Breast epithelium (tissue), 4 donors: ENCODE measurements at regions of chr21 and their contacts with region 1.

Region 1: DNA sequence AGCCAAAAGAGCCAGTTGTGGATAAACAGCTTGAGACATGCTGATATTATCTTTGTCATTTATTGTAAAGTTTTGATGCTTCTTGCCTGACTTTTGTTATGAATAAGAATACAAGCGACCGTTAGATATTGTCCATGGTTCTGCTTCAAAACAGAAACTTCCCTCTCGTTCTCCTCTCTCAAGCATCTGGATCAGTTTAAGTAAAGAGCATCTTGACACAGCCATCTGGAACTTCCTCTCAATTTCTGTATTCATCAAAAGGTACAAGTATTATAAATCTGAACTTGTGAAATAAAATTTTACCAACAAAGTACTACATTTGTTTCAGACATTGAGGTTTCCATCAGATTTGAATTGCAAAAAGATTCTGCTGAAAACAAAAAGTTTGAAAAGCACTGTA is 36.4 kb upstream of the CLDN14 start:
- DNase-seq: no peak
- H3K4me3 ChIP-seq: no peak overlapping the region
- H3K27ac ChIP-seq: no peak overlapping the region
- H3K4me1 ChIP-seq: peaks cover 0 to 4% of the 10 kb centered on the region in 2 donors
- H3K27me3 ChIP-seq: no peaks in the 10 kb centered on the region
- CTCF ChIP-seq: no peak
- POLR2A ChIP-seq: no peak

Region 2: DNA sequence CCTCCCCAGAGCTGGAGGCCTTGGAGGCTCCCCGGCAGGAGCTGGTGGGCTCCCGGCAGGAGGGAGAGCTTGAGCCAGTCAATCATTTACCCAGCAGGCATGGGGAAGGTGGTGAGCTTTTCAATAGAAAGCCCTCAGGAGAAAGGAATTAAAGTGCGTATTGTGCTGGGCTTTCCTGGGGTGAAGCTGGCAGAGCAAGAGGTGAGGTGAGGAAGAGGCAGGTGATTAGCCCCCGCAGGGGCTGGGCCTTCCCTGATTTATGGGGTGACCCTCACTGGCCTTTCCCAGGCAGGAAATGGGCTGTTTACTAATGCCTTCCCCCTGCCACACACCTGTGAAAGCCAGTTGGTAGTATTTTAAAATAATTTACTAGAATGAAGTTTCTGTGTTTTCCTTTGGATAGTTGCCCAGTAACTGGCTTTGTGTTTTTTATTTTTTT is 62.2 kb before region 1 on chr21:
- intact Hi-C with region 1: loop called (anchors 2 kb)
- DNase-seq: no peak
- H3K4me3 ChIP-seq: no peak overlapping the region
- H3K27ac ChIP-seq: peak overlapping the region in 1 of 2 donors; percentile 17
- H3K4me1 ChIP-seq: peaks cover 0 to 5% of the 10 kb centered on the region in 2 donors
- H3K27me3 ChIP-seq: no peaks in the 10 kb centered on the region
- CTCF ChIP-seq: no peak
- POLR2A ChIP-seq: no peak

Region 3: GRCh38 chr21:36575306-36575705 is 59.0 kb after region 1 on chr21:
- intact Hi-C with region 1: loop called (anchors 2 kb)
- DNase-seq: no peak
- H3K4me3 ChIP-seq: no peak overlapping the region
- H3K27ac ChIP-seq: no peak overlapping the region
- H3K4me1 ChIP-seq: no peaks in the 10 kb centered on the region
- H3K27me3 ChIP-seq: peaks cover 0 to 13% of the 10 kb centered on the region in 2 donors
- CTCF ChIP-seq: no peak
- POLR2A ChIP-seq: no peak